GM12878 (cell line): ENCODE measurements at regions of chrX and their contacts with region 1.

Region 1: GRCh38 chrX:143894938-143895337 is 11.1 kb downstream of the UBE2NL start:
- DNase-seq: no peak
- ATAC-seq: no peak
- H3K4me3 ChIP-seq: no peak overlapping the region
- H3K27ac ChIP-seq: no peak overlapping the region
- H3K4me1 ChIP-seq: no peaks in the 10 kb centered on the region
- H3K27me3 ChIP-seq: no peaks in the 10 kb centered on the region
- CTCF ChIP-seq: no peak
- EP300 ChIP-seq: no peak
- POLR2A ChIP-seq: no peak
- RAD21 ChIP-seq: no peak

Region 2: GRCh38 chrX:143486105-143486504 is 408.8 kb before region 1 on chrX:
- CTCF ChIA-PET with region 1: no interaction called
- POLR2A ChIA-PET with region 1: no interaction called
- RAD21 ChIA-PET with region 1: no interaction called
- SMC1A ChIA-PET with region 1: no interaction called
- in situ Hi-C with region 1: no loop called
- intact Hi-C with region 1: no loop called
- DNase-seq: no peak
- ATAC-seq: no peak
- H3K4me3 ChIP-seq: no peak overlapping the region
- H3K27ac ChIP-seq: no peak overlapping the region
- H3K4me1 ChIP-seq: no peaks in the 10 kb centered on the region
- H3K27me3 ChIP-seq: no peaks in the 10 kb centered on the region
- CTCF ChIP-seq: no peak
- EP300 ChIP-seq: no peak
- POLR2A ChIP-seq: no peak
- RAD21 ChIP-seq: no peak

Region 3: DNA sequence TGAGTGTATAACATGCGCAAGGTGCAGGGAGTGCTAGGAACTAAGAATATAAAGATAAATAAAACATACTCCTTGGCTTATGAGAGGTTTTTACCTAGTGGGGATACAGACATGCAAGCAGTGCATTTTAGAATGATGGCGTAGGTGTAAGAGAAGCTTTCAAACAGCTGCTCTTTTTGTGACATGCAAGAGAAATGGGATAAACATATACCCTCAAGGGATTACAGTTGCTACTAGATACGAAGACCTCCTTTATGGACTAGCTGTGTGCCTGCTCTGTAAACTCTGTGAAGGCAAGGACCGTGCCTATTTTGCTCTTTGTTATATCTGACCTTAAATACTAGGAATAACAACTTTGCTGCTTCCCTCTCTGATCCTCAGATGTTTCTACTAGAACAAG is 220.0 kb before region 1 on chrX:
- CTCF ChIA-PET with region 1: no interaction called
- POLR2A ChIA-PET with region 1: no interaction called
- RAD21 ChIA-PET with region 1: no interaction called
- SMC1A ChIA-PET with region 1: no interaction called
- in situ Hi-C with region 1: no loop called
- intact Hi-C with region 1: loop called (anchors 10 kb)
- DNase-seq: no peak
- ATAC-seq: no peak
- H3K4me3 ChIP-seq: no peak overlapping the region
- H3K27ac ChIP-seq: no peak overlapping the region
- H3K4me1 ChIP-seq: no peaks in the 10 kb centered on the region
- H3K27me3 ChIP-seq: no peaks in the 10 kb centered on the region
- CTCF ChIP-seq: no peak
- EP300 ChIP-seq: no peak
- POLR2A ChIP-seq: no peak
- RAD21 ChIP-seq: no peak

Region 4: DNA sequence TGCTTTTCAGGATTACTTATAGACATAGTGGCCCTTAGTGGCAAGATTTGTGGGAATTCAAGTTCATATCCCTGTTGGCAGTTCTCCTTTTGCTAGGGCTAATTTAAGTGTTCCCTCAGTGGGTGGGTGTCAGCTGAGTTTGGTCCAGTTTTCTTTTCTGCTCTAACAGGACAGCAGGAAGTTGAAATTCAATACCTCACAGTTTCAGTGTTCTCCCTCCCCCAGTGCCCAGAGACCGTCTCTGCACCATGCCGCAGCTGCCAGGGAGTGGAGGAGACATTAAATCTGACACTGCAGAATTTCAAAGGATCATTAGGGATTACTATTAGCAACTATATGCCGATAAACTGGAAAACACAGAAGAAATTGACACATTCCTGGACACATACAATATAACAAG is 39.6 kb after region 1 on chrX:
- CTCF ChIA-PET with region 1: no interaction called
- POLR2A ChIA-PET with region 1: no interaction called
- RAD21 ChIA-PET with region 1: no interaction called
- SMC1A ChIA-PET with region 1: no interaction called
- in situ Hi-C with region 1: no loop called
- intact Hi-C with region 1: no loop called
- DNase-seq: no peak
- ATAC-seq: no peak
- H3K4me3 ChIP-seq: no peak overlapping the region
- H3K27ac ChIP-seq: no peak overlapping the region
- H3K4me1 ChIP-seq: no peaks in the 10 kb centered on the region
- H3K27me3 ChIP-seq: no peaks in the 10 kb centered on the region
- CTCF ChIP-seq: no peak
- EP300 ChIP-seq: no peak
- POLR2A ChIP-seq: no peak
- RAD21 ChIP-seq: no peak

Region 5: GRCh38 chrX:144006811-144007210 is 111.9 kb after region 1 on chrX:
- CTCF ChIA-PET with region 1: no interaction called
- POLR2A ChIA-PET with region 1: no interaction called
- RAD21 ChIA-PET with region 1: no interaction called
- SMC1A ChIA-PET with region 1: no interaction called
- in situ Hi-C with region 1: no loop called
- intact Hi-C with region 1: no loop called
- DNase-seq: no peak
- ATAC-seq: no peak
- H3K4me3 ChIP-seq: no peak overlapping the region
- H3K27ac ChIP-seq: no peak overlapping the region
- H3K4me1 ChIP-seq: no peaks in the 10 kb centered on the region
- H3K27me3 ChIP-seq: no peaks in the 10 kb centered on the region
- CTCF ChIP-seq: no peak
- EP300 ChIP-seq: no peak
- POLR2A ChIP-seq: no peak
- RAD21 ChIP-seq: no peak